ENCODE measurements at regions of chr13 and their contacts with region 1.

Region 1: GRCh38 chr13:49185264-49185663 is 34.9 kb upstream of the MLNR start:
- H3K4me3 Mint-ChIP-seq: no peak overlapping the region
- H3K27ac Mint-ChIP-seq: no peak overlapping the region
- H3K4me1 Mint-ChIP-seq: no peaks in the 10 kb centered on the region
- H3K27me3 Mint-ChIP-seq: no peaks in the 10 kb centered on the region

Region 2: GRCh38 chr13:48994706-48995105 is 190.6 kb before region 1 on chr13:
- intact Hi-C with region 1: loop called (anchors 10 kb)
- H3K4me3 Mint-ChIP-seq: no peak overlapping the region
- H3K27ac Mint-ChIP-seq: no peak overlapping the region
- H3K4me1 Mint-ChIP-seq: peaks cover 11% of the 10 kb centered on the region
- H3K27me3 Mint-ChIP-seq: no peaks in the 10 kb centered on the region

Region 3: GRCh38 chr13:49356223-49356622 is 171.0 kb after region 1 on chr13:
- intact Hi-C with region 1: no loop called
- H3K4me3 Mint-ChIP-seq: no peak overlapping the region
- H3K27ac Mint-ChIP-seq: no peak overlapping the region
- H3K4me1 Mint-ChIP-seq: peaks cover 6% of the 10 kb centered on the region
- H3K27me3 Mint-ChIP-seq: no peaks in the 10 kb centered on the region